Activated CD8-positive, alpha-beta memory T cell treated with anti-CD3 and anti-CD28 coated beads, Interleukin-2, amount 10 ng/mL, durations not matched to agents 7 days and 5 days (primary cell): ENCODE measurements at regions of chr16 and their contacts with region 1.

Region 1: GRCh38 chr16:3150346-3151218 is 15.8 kb downstream of the ZNF213 start:
- DNase-seq: peak; percentile 99
- ATAC-seq: peak; percentile 86
- H3K4me3 Mint-ChIP-seq: peak overlapping the region; percentile 82
- H3K27ac Mint-ChIP-seq: peak overlapping the region; percentile 90
- H3K4me1 Mint-ChIP-seq: peaks cover 32% of the 10 kb centered on the region
- H3K27me3 Mint-ChIP-seq: peaks cover 21% of the 10 kb centered on the region

Region 2: DNA sequence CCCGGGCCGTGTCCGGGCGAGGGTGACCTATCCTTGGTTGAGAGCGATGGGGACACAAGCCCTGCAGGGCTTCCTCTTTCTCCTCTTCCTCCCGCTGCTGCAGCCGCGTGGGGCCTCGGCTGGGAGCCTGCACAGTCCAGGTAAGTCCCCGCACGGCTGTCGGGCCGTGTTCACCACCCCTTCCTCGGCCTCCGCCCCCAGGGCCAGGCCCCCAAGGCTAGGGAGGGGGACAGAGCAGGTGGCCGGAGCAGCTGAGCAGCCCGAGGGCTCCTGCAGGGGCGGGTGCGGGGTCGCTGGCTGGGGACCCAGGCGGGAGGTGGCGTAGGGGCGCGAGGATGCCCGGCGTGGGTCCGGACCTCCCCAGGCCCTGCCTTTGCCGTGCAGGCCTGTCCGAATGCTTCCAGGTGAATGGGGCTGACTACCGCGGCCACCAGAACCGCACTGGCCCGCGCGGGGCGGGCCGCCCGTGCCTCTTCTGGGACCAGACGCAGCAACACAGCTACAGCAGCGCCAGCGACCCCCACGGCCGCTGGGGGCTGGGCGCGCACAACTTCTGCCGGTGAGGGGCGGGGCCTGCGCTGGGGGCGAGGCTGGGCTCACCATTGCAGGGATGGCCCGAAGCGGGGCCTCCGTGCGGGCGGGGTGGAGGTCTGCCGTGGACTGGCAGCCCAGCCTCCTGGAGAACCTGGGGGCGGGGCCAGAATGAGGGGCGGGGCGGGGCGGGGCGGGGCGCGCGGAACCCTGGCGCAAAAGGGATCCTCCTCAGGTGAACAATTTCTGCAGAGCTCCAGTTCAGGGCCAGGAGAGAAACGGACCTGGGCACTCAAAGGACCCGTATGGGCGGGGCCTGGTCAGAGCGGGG is 185.9 kb before region 1 on chr16:
- CTCF ChIA-PET with region 1: no interaction called
- DNase-seq: peak; percentile 81
- ATAC-seq: peak; percentile 30
- H3K4me3 Mint-ChIP-seq: peak overlapping the region; percentile 43
- H3K27ac Mint-ChIP-seq: no peak overlapping the region
- H3K4me1 Mint-ChIP-seq: peaks cover 30% of the 10 kb centered on the region
- H3K27me3 Mint-ChIP-seq: peaks cover 41% of the 10 kb centered on the region

Region 3: GRCh38 chr16:3065742-3066439 is 84.7 kb before region 1 on chr16:
- CTCF ChIA-PET with region 1: no interaction called
- DNase-seq: no peak
- ATAC-seq: peak; percentile 11
- H3K4me3 Mint-ChIP-seq: peak overlapping the region; percentile 100
- H3K27ac Mint-ChIP-seq: peak overlapping the region; percentile 97
- H3K4me1 Mint-ChIP-seq: peaks cover 59% of the 10 kb centered on the region
- H3K27me3 Mint-ChIP-seq: no peaks in the 10 kb centered on the region

Region 4: GRCh38 chr16:3123986-3124886 is 26.3 kb before region 1 on chr16:
- CTCF ChIA-PET with region 1: interaction called, 128 read pairs
- DNase-seq: peak; percentile 99
- ATAC-seq: peak; percentile 88
- H3K4me3 Mint-ChIP-seq: peak overlapping the region; percentile 98
- H3K27ac Mint-ChIP-seq: peak overlapping the region; percentile 99
- H3K4me1 Mint-ChIP-seq: peaks cover 49% of the 10 kb centered on the region
- H3K27me3 Mint-ChIP-seq: no peaks in the 10 kb centered on the region

Region 5: GRCh38 chr16:3198334-3199072 is 47.9 kb after region 1 on chr16:
- CTCF ChIA-PET with region 1: no interaction called
- DNase-seq: no peak
- ATAC-seq: no peak
- H3K4me3 Mint-ChIP-seq: no peak overlapping the region
- H3K27ac Mint-ChIP-seq: no peak overlapping the region
- H3K4me1 Mint-ChIP-seq: no peaks in the 10 kb centered on the region
- H3K27me3 Mint-ChIP-seq: peaks cover 25% of the 10 kb centered on the region

Region 6: DNA sequence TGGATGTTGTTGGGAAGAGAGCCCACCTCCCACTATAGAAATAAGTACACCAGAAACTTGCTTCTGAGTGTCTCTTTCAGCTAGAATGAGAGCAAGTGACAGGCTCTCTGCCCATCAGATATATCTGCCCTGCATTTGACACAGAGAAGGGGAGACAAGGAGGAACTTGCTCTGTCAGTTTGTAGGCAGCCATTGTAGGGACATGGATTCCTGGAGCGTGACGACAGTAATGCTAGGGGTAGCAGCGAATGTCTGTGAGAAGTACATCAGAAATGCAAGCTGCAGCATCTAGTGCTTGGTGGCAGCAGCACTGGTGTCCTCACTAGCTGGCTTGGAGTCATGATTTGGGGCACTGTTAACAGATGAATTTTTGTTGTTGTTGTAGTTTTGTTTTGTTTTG is 61.4 kb after region 1 on chr16:
- CTCF ChIA-PET with region 1: no interaction called
- DNase-seq: no peak
- ATAC-seq: no peak
- H3K4me3 Mint-ChIP-seq: no peak overlapping the region
- H3K27ac Mint-ChIP-seq: no peak overlapping the region
- H3K4me1 Mint-ChIP-seq: peaks cover 27% of the 10 kb centered on the region
- H3K27me3 Mint-ChIP-seq: no peaks in the 10 kb centered on the region